ENCODE measurements at regions of chr17 and their contacts with region 1.

Region 1: DNA sequence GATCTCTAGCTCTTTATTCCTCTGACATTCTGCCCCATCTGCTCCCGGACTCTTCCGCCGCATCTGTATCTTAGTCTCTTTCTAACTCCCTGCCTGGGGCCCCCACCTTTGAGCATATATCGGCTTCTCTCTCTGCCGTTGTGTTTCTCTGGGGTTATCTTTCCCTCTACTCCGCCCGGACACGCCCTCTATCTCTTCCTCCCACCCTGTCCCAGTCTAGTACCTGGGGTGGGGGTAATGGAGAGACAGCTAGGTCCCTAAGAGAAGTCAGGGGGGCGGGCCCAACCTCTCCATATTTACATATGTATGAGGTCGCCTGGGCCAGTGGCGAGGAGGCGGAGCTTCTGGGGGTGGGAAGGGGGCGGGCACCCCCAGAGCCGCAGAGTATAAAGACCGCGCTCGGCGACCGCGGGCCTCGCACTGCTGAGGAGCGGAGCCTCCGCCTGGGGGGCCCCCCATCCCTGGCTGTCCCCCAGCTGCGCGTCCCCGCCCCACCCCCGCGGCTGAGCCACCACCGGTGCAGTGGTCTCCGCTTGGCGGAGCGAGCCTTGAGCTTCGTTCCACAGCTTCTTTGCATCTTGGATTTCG is at the start of gene ATP1B2:
- DNase-seq: peak; percentile 59 to 84 (median 72)
- H3K4me3 ChIP-seq: peak within 1 kb of the TSS; percentile 64
- H3K4me3 Mint-ChIP-seq: peak within 1 kb of the TSS; percentile 80 to 90 (median 87)
- H3K27ac ChIP-seq: no peak within 1 kb of the TSS
- H3K27ac Mint-ChIP-seq: peak within 1 kb of the TSS in 7 of 8 donors; percentile 33 to 75 (median 60)
- H3K4me1 ChIP-seq: peaks cover 9% of the 10 kb centered on the region
- H3K4me1 Mint-ChIP-seq: peaks cover 10 to 22% (median 15%) of the 10 kb centered on the region in 3 donors
- H3K27me3 ChIP-seq: peaks cover 18% of the 10 kb centered on the region
- H3K27me3 Mint-ChIP-seq: peaks cover 38 to 43% of the 10 kb centered on the region in 2 donors
- total RNA-seq, gene ATP1B2: 0.40 to 0.53 TPM

Region 2: GRCh38 chr17:7363311-7363710 is 287.3 kb before region 1 on chr17:
- CTCF ChIA-PET with region 1: no interaction called
- POLR2A ChIA-PET with region 1: no interaction called
- DNase-seq: no peak
- H3K4me3 ChIP-seq: no peak overlapping the region
- H3K4me3 Mint-ChIP-seq: no peak overlapping the region
- H3K27ac ChIP-seq: no peak overlapping the region
- H3K27ac Mint-ChIP-seq: no peak overlapping the region
- H3K4me1 ChIP-seq: no peaks in the 10 kb centered on the region
- H3K4me1 Mint-ChIP-seq: no peaks in the 10 kb centered on the region
- H3K27me3 ChIP-seq: no peaks in the 10 kb centered on the region
- H3K27me3 Mint-ChIP-seq: peaks cover 1 to 5% of the 10 kb centered on the region in 2 donors

Region 3: GRCh38 chr17:7589891-7590691 is 60.5 kb before region 1 on chr17 and contains the start of gene SOX15:
- CTCF ChIA-PET with region 1: no interaction called
- POLR2A ChIA-PET with region 1: no interaction called
- DNase-seq: no peak
- H3K4me3 ChIP-seq: no peak within 1 kb of the TSS
- H3K4me3 Mint-ChIP-seq: peak within 1 kb of the TSS in 1 of 7 donors; percentile 65
- H3K27ac ChIP-seq: no peak within 1 kb of the TSS
- H3K27ac Mint-ChIP-seq: peak within 1 kb of the TSS in 3 of 8 donors; percentile 30 to 88 (median 83)
- H3K4me1 ChIP-seq: peaks cover under 1% of the 10 kb centered on the region
- H3K4me1 Mint-ChIP-seq: peaks cover 3 to 8% (median 5%) of the 10 kb centered on the region in 3 donors
- H3K27me3 ChIP-seq: no peaks in the 10 kb centered on the region
- H3K27me3 Mint-ChIP-seq: no peaks in the 10 kb centered on the region
- total RNA-seq, gene SOX15: 0.29 to 0.31 TPM

Region 4: DNA sequence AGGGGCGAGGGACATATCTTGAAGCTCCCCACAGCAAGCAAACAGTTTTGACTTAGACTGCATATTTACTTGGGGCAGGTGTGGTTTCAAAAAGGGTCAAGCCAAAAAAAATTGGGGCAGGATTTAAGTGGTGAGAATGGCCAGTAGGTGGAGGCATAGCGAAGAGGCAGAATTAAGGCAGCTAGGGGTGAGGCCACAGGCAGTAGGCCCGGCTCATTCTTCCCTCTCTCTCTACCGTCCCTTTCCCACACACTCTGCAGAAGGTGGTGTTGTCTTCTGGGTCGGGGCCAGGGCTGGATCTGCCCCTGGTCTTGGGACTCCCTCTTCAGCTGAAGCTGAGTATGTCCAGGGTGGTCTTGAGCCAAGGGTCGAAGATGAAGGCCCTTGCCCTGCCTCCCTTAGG is 18.1 kb before region 1 on chr17:
- CTCF ChIA-PET with region 1: interaction called, 6 read pairs
- POLR2A ChIA-PET with region 1: interaction called, 10 read pairs
- DNase-seq: no peak
- H3K4me3 ChIP-seq: no peak overlapping the region
- H3K4me3 Mint-ChIP-seq: peak overlapping the region in 1 of 7 donors; percentile 77
- H3K27ac ChIP-seq: no peak overlapping the region
- H3K27ac Mint-ChIP-seq: peak overlapping the region in 1 of 8 donors; percentile 31
- H3K4me1 ChIP-seq: no peaks in the 10 kb centered on the region
- H3K4me1 Mint-ChIP-seq: peaks cover 3 to 5% (median 4%) of the 10 kb centered on the region in 3 donors
- H3K27me3 ChIP-seq: no peaks in the 10 kb centered on the region
- H3K27me3 Mint-ChIP-seq: no peaks in the 10 kb centered on the region

Region 5: GRCh38 chr17:7673239-7673638 is 22.6 kb after region 1 on chr17:
- CTCF ChIA-PET with region 1: interaction called, 11 read pairs
- POLR2A ChIA-PET with region 1: no interaction called
- DNase-seq: peak in 1 of 5 donors; percentile 21
- H3K4me3 ChIP-seq: no peak overlapping the region
- H3K4me3 Mint-ChIP-seq: no peak overlapping the region
- H3K27ac ChIP-seq: no peak overlapping the region
- H3K27ac Mint-ChIP-seq: no peak overlapping the region
- H3K4me1 ChIP-seq: no peaks in the 10 kb centered on the region
- H3K4me1 Mint-ChIP-seq: peaks cover 5 to 8% (median 5%) of the 10 kb centered on the region in 3 donors
- H3K27me3 ChIP-seq: no peaks in the 10 kb centered on the region
- H3K27me3 Mint-ChIP-seq: no peaks in the 10 kb centered on the region

Region 6: GRCh38 chr17:7755095-7755890 is 104.7 kb after region 1 on chr17:
- CTCF ChIA-PET with region 1: no interaction called
- POLR2A ChIA-PET with region 1: no interaction called
- DNase-seq: no peak
- H3K4me3 ChIP-seq: no peak overlapping the region
- H3K4me3 Mint-ChIP-seq: no peak overlapping the region
- H3K27ac ChIP-seq: no peak overlapping the region
- H3K27ac Mint-ChIP-seq: no peak overlapping the region
- H3K4me1 ChIP-seq: no peaks in the 10 kb centered on the region
- H3K4me1 Mint-ChIP-seq: no peaks in the 10 kb centered on the region
- H3K27me3 ChIP-seq: no peaks in the 10 kb centered on the region
- H3K27me3 Mint-ChIP-seq: peaks cover 2 to 24% of the 10 kb centered on the region in 2 donors

Measured in CD8-positive, alpha-beta memory T cell (primary cell).